MCF 10A (cell line): ENCODE measurements at regions of chr11 and their contacts with region 1.

Region 1: GRCh38 chr11:58788355-58789023 is 56.0 kb downstream of the GLYATL2 start:
- DNase-seq: peak; percentile 78
- H3K4me3 Mint-ChIP-seq: no peak overlapping the region
- H3K27ac Mint-ChIP-seq: no peak overlapping the region
- H3K4me1 Mint-ChIP-seq: peaks cover 7% of the 10 kb centered on the region
- H3K27me3 Mint-ChIP-seq: no peaks in the 10 kb centered on the region
- CTCF ChIP-seq: peak; percentile 89

Region 2: GRCh38 chr11:58524232-58525036 is 264.1 kb before region 1 on chr11:
- CTCF ChIA-PET with region 1: interaction called, 3 read pairs
- POLR2A ChIA-PET with region 1: no interaction called
- intact Hi-C with region 1: loop called (anchors 2 kb)
- DNase-seq: peak; percentile 78
- H3K4me3 Mint-ChIP-seq: no peak overlapping the region
- H3K27ac Mint-ChIP-seq: no peak overlapping the region
- H3K4me1 Mint-ChIP-seq: peaks cover 5% of the 10 kb centered on the region
- H3K27me3 Mint-ChIP-seq: peaks cover 5% of the 10 kb centered on the region
- CTCF ChIP-seq: peak; percentile 83

Region 3: DNA sequence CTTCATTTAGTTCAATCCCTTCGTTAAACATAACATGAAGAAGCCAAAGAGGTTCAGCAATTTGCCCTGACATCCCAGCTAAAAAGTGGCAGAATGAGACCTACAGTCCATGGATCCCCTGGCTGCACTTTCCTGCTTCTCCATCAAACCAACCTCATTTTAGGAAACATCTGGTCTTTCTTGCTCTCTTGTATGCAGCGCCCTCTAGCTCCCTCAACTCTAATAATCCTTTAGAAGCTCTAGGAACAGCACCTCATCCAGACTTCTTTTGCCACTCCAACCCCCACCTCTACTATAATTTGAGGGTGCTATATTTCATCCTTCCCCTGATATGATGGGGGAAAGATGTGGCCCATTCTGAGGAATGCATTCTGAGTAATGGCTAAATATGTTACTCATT is 158.6 kb before region 1 on chr11:
- CTCF ChIA-PET with region 1: interaction called, 30 read pairs
- POLR2A ChIA-PET with region 1: interaction called, 5 read pairs
- intact Hi-C with region 1: no loop called
- DNase-seq: peak; percentile 61
- H3K4me3 Mint-ChIP-seq: no peak overlapping the region
- H3K27ac Mint-ChIP-seq: no peak overlapping the region
- H3K4me1 Mint-ChIP-seq: peaks cover 28% of the 10 kb centered on the region
- H3K27me3 Mint-ChIP-seq: no peaks in the 10 kb centered on the region
- CTCF ChIP-seq: peak; percentile 51

Region 4: DNA sequence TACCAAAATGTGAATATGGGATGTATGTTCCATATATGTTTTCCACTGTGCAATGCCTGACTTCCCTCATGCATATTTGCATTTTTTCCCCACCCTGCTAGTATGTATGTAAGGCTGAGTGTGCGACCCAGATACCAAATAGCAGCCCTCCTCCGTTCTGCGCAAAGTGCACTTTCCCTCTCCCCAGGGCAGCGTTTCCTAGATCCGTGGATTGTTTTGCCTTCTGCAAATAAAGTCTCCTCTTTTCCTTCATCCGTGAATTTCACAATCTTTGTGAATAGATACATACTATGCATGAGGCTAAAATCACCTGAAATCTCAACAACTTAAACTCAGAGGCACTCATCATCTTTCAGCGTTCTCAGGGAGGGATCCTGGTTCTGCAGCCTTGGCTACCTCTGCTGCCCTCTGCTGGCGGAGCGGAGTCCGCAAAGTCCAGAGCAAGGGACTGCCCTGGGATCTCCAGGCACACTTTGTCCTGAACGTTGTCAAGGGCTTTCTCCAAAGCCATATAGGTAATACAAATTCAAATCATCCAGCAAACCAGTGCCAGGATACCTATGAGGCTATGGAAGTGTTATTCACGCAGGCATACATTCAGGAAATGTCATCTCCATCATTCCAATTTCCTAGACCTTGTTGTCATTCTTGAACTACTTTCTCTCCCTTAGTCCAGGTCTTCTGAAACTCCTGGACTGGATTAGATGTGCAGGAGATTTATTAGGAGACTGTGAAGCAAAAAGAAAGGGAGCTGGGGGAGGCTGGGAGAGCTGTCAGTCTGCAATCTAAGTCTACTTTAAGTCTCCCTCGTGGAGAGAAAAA is 112.9 kb before region 1 on chr11:
- CTCF ChIA-PET with region 1: interaction called, 26 read pairs
- POLR2A ChIA-PET with region 1: interaction called, 3 read pairs
- intact Hi-C with region 1: loop called (anchors 1 kb)
- DNase-seq: peak; percentile 63
- H3K4me3 Mint-ChIP-seq: no peak overlapping the region
- H3K27ac Mint-ChIP-seq: no peak overlapping the region
- H3K4me1 Mint-ChIP-seq: no peaks in the 10 kb centered on the region
- H3K27me3 Mint-ChIP-seq: no peaks in the 10 kb centered on the region
- CTCF ChIP-seq: peak; percentile 83

Region 5: GRCh38 chr11:58770627-58771457 is 17.6 kb before region 1 on chr11:
- CTCF ChIA-PET with region 1: interaction called, 20 read pairs
- POLR2A ChIA-PET with region 1: interaction called, 3 read pairs
- intact Hi-C with region 1: no loop called
- DNase-seq: peak; percentile 95
- H3K4me3 Mint-ChIP-seq: peak overlapping the region; percentile 46
- H3K27ac Mint-ChIP-seq: peak overlapping the region; percentile 53
- H3K4me1 Mint-ChIP-seq: peaks cover 23% of the 10 kb centered on the region
- H3K27me3 Mint-ChIP-seq: no peaks in the 10 kb centered on the region
- CTCF ChIP-seq: no peak